ENCODE measurements at regions of chr6 and their contacts with region 1.

Region 1: GRCh38 chr6:35267461-35267860 is 7.9 kb downstream of the ZNF76 start:
- H3K4me3 ChIP-seq: no peak overlapping the region
- H3K27ac ChIP-seq: no peak overlapping the region
- H3K4me1 ChIP-seq: peaks cover 4% of the 10 kb centered on the region; the same call in 1 of the 2 replicates
- CTCF ChIP-seq: no peak

Region 2: DNA sequence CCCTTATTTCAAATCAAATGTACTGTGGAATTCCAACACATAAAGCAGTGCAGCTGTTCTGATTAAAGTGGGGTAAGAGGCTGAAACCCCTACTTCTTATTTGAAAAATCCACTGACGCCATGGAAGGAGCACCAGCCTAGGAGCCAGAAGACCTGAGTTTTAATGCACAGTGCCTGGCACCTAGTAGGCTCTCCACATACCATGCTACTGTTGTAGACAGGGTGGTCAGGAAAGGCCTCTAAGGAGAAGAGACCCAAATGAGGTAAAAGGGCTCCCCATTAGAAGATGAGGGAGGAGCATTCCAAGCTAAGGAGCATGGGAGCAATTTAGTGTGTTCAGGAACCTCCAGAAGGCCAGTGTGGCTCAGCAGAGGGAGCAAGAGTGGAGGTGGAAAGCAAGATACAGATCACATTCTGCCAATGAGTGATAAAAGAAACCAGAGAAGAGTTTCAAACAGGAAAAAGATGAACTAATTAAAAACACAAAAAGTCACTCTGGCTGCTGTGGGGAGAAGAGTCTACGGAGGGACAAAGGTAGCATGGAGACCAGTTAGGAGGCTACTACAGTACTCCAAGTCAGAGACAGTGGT is 19.7 kb before region 1 on chr6:
- CTCF ChIA-PET with region 1: no interaction called
- POLR2A ChIA-PET with region 1: no interaction called
- H3K4me3 ChIP-seq: no peak overlapping the region
- H3K27ac ChIP-seq: no peak overlapping the region
- H3K4me1 ChIP-seq: no peaks in the 10 kb centered on the region
- CTCF ChIP-seq: no peak

Region 3: DNA sequence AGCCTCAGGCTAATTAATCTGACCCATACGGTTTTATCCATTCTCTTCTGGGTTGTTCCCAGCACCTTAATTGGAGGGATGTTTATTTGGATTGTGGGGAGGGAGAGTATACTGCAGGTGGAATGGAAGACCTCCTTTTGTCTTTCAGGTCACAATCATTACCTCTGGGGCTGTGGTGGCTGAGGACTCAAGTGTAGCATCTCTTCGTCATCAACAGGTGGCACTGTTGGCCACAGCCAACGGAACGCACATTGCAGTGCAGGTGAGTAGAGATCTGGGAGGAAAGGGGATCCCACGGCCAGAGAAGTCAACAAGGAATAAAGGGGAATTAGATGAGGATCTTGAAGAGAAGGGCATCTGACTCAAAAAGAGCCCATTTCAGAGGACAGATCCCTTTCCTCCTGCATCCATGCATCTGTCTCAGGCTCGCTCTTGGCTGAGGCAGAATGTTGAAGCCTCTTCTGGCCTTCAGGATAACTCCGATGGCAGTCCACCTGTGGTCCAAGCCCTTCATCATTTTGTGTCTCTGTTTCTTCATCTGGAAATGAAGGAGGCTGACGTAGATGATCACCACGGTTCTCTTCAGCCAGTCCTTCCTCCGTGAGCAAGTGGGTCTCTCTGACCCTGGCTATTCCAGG is 27.0 kb after region 1 on chr6:
- CTCF ChIA-PET with region 1: no interaction called
- POLR2A ChIA-PET with region 1: no interaction called
- H3K4me3 ChIP-seq: no peak overlapping the region
- H3K27ac ChIP-seq: no peak overlapping the region
- H3K4me1 ChIP-seq: no peaks in the 10 kb centered on the region
- CTCF ChIP-seq: peak; percentile 86

Region 4: DNA sequence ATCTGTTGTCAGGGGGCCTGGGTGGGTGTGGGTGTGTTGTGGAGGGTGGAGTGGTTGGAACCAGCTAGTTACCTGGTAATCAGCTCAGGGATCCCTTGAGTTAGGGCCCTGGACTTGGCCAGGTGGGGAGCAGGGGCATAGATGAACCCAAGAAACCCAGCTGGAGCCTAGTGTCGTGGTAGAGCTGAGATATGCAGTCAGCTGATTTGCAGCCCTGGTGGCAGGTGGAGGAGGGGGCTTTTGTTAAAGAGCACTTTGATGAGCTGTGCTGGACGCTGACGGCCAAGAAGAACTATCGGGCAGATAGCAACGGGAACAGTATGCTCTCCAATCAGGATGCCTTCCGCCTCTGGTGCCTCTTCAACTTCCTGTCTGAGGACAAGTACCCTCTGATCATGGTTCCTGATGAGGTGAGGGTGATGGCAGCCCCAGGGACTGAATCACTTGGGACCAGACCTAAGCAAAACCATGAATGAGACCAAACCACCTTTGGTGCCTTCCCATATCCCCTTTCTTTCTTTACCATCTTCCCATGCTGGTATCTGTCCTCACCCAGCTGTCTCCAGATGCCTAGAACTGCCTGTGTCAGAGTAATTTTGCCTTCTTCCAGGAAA is 42.9 kb after region 1 on chr6:
- CTCF ChIA-PET with region 1: no interaction called
- POLR2A ChIA-PET with region 1: no interaction called
- H3K4me3 ChIP-seq: no peak overlapping the region
- H3K27ac ChIP-seq: no peak overlapping the region
- H3K4me1 ChIP-seq: no peaks in the 10 kb centered on the region
- CTCF ChIP-seq: no peak

Region 5: DNA sequence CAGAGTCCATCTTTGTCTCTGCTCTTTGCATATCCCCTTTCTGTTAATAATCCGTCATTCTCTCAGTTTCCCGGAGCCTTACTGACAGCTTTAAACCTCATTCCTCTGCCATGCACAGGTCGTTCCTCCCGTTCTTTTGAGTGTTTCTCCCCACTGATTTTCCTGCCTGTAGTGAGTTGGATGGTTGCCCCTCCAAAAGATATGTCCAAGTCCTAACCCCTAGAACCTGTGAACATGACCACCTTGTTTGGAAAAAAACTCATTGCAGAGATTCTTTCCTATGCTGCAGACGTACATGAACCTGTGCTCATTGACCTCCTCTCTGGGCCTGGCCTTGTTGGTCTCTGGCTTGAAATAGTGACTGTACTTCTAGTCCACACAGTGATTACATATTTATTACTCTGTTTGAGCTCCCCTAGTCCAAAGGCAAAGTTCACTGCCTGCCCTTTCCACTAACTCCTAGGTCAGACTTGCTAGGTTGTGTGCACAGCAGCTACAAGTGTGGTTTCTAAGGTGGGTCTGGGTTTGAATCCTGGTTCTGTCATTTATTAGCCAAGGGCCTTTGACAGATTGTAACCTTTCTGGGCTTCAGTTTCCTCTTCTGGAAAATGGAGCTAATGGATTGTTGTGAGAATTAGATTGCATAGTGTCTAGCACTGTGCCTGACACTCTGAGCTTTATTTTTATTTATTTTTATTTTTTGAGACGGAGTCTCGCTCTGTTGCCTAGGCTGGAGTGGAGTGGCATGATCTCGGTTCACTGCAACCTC is 104.2 kb after region 1 on chr6:
- CTCF ChIA-PET with region 1: interaction called, 10 read pairs
- POLR2A ChIA-PET with region 1: no interaction called
- H3K4me3 ChIP-seq: no peak overlapping the region
- H3K27ac ChIP-seq: no peak overlapping the region
- H3K4me1 ChIP-seq: peaks cover 4% of the 10 kb centered on the region; the same call in 1 of the 2 replicates
- CTCF ChIP-seq: no peak